Left colon (tissue), 2 donors: ENCODE measurements at regions of chr10 and their contacts with region 1.

Region 1: GRCh38 chr10:25080880-25081581 is 64.6 kb downstream of the THNSL1 start:
- DNase-seq: peak; percentile 78 to 88
- ATAC-seq: peak; percentile 85

Region 2: DNA sequence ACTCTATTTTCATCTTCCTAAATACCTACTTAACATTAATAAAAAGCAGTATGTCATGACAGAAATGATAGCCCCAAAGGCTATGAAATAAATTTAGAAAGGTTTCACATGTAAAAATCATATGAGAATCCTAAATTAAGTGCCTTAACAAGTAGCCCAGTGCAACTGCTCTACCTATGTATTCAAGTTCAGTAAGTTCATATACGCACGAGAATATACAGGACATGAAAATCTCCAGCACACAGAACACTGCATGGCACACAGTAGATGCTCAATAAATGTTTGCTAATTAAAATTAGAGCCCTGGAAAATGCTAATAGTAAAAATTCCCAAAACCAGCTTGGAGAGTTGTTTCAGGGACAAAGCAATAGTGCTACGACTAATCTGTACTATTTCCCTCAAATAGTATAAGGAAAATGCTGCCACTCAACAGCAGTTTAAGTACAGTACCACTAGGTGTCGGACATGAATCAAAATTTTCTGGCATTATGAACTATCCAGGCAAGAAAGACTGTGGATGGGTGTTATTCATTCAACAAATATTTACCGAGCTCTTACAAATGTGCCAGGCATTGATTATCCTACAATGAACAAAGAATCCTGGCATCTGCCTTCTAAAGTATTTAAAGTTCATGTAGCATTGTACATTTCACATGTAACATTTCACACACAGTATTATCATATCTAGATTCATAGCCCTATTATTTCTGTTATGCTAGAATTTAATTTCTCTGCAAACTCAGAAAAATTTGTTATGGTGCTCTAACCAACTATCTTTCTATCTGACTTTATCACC is 438.2 kb before region 1 on chr10:
- intact Hi-C with region 1: loop called in 1 of 2 experiments (anchors 5 kb)
- DNase-seq: no peak
- ATAC-seq: peak; percentile 92

Region 3: GRCh38 chr10:24731942-24732341 is 349.1 kb before region 1 on chr10:
- intact Hi-C with region 1: loop called in 1 of 2 experiments (anchors 10 kb)
- DNase-seq: no peak
- ATAC-seq: peak; percentile 97

Region 4: DNA sequence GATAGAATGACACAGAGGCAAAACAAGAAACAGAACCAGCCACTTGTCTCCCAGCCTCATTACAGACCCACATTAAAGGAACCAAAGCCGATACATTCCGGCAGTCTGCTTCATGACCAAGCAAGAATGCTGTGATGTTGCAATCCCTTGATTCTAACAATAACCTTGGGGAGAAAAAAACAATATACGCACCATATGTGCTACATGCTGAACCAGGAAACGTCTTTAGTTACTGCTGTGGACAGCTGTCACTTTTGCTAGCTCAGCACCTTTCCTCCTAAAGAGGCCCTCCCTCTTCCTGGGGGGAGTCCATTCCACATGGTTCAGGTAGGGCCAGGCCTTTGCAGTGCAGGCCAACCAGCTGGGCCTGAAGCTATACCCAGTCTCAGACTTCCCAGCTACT is 207.7 kb before region 1 on chr10:
- intact Hi-C with region 1: no loop called
- DNase-seq: peak in 1 of 2 donors; percentile 31
- ATAC-seq: peak; percentile 71